MCF 10A (cell line): ENCODE measurements at regions of chrX and their contacts with region 1.

Region 1: GRCh38 chrX:36573720-36574119 is 434.4 kb upstream of the FAM47C start:
- DNase-seq: no peak
- H3K4me3 Mint-ChIP-seq: no peak overlapping the region
- H3K27ac Mint-ChIP-seq: no peak overlapping the region
- H3K4me1 Mint-ChIP-seq: no peaks in the 10 kb centered on the region
- H3K27me3 Mint-ChIP-seq: no peaks in the 10 kb centered on the region
- CTCF ChIP-seq: no peak

Region 2: DNA sequence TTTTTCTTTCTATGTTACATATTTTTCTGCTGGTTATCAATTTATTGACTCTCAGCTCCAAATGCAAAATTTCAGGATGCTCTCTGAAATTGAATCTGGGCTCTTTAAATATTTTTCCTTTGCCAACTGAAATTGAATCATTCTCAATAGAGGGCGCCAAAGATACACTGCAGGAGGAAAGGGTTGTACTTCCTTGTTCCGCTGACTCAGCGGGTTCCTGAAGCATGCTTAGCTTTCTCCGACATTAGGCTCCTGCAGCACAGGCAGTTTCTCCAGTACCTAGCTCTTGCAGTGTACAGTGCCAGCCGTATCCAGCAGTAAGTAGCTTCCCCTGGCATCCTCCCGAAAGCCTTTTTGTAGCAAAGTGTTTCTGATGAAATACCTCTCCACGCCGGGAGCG is 683.0 kb before region 1 on chrX:
- CTCF ChIA-PET with region 1: interaction called, 3 read pairs
- POLR2A ChIA-PET with region 1: no interaction called
- intact Hi-C with region 1: loop called (anchors 5 kb)
- DNase-seq: peak; percentile 79
- H3K4me3 Mint-ChIP-seq: no peak overlapping the region
- H3K27ac Mint-ChIP-seq: no peak overlapping the region
- H3K4me1 Mint-ChIP-seq: no peaks in the 10 kb centered on the region
- H3K27me3 Mint-ChIP-seq: no peaks in the 10 kb centered on the region
- CTCF ChIP-seq: peak; percentile 56

Region 3: GRCh38 chrX:36528661-36529060 is 45.1 kb before region 1 on chrX:
- CTCF ChIA-PET with region 1: no interaction called
- POLR2A ChIA-PET with region 1: no interaction called
- intact Hi-C with region 1: no loop called
- DNase-seq: no peak
- H3K4me3 Mint-ChIP-seq: no peak overlapping the region
- H3K27ac Mint-ChIP-seq: peak overlapping the region; percentile 55
- H3K4me1 Mint-ChIP-seq: peaks cover 7% of the 10 kb centered on the region
- H3K27me3 Mint-ChIP-seq: no peaks in the 10 kb centered on the region
- CTCF ChIP-seq: no peak

Region 4: DNA sequence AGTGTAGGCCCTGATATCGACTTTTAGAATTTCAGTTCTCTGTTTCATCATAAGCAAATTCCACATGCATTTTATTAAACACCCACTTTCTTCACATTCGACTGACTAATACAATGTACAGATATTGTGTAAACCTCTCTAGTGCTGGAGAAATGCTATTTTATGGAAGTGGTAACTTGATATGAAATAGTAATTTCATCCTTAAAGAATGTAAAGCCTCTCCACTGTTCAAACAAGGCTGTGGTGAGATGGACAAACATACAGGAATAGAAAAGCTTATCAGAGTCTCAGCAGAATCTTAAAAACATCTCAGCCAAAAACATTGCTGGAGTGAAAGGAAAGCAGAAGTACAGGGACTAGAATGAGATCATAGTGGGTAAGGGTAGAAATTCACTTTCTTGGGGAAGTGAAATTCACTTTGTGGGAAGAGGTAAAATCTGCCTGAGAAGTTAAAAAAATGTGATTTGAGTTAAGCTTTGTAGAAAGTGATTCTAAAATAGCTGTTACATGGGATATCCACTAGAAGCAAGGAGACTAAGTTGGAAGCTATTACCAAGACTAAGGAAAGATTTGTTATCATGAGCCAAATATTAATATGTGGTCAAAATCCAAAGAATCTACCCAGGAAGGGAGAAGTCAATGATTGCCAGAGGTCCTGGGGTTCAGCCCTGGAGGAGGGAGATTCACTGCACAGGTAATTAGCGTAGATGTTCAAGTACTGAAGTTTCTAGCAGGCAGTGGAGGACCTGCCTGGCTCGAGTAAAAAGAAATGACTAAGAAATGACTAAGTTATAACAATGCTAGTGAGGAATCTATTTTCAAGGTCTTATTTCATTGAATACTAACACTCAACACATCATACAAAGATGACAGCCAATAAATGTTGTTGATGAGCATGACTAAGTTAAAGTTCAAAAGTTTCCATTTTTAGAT is 36.2 kb after region 1 on chrX:
- CTCF ChIA-PET with region 1: no interaction called
- POLR2A ChIA-PET with region 1: no interaction called
- intact Hi-C with region 1: no loop called
- DNase-seq: peak; percentile 46
- H3K4me3 Mint-ChIP-seq: no peak overlapping the region
- H3K27ac Mint-ChIP-seq: peak overlapping the region; percentile 6
- H3K4me1 Mint-ChIP-seq: peaks cover 7% of the 10 kb centered on the region
- H3K27me3 Mint-ChIP-seq: peaks cover 15% of the 10 kb centered on the region
- CTCF ChIP-seq: no peak

Region 5: DNA sequence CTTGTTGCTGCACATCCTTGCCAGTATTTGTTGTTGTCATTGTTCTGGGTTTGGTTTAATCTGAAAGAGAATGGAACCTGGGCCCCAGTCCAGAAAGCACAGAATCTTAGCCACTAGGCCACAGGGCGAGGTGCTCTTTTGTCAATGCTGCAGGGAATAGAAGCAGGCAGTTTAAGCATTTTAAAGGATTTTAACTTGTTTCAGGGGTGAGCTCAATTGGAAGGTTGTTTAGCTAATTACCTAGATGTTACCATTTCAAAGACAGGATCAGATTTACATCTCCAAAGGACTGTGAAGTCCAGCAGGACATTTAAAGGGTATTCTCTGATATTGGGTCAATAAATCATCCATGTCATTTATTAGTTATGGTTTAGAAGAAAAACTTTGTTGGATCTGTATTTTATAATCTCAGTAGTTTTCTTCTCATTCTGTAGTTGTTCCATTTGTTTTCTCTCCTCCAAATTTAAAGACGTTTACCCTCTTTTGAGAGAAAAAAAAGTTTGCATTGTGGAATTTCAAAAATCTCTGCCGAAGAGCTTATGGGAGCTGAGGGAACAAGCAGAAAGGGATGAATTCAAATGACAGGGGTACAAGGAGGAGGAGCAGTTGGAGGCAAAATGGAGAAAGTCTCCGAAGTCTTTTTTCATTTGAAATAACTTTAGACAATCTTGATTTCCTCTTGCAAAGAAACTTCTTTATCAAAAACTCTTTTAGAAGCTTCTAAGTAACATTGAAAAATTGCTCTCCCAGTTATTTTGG is 377.0 kb after region 1 on chrX:
- CTCF ChIA-PET with region 1: no interaction called
- POLR2A ChIA-PET with region 1: no interaction called
- intact Hi-C with region 1: no loop called
- DNase-seq: no peak
- H3K4me3 Mint-ChIP-seq: no peak overlapping the region
- H3K27ac Mint-ChIP-seq: no peak overlapping the region
- H3K4me1 Mint-ChIP-seq: no peaks in the 10 kb centered on the region
- H3K27me3 Mint-ChIP-seq: peaks cover 39% of the 10 kb centered on the region
- CTCF ChIP-seq: no peak